Activated CD4-positive, alpha-beta memory T cell treated with anti-CD3 and anti-CD28 coated beads, Interleukin-2, amount 10 ng/mL, durations not matched to agents 7 days and 5 days (primary cell): ENCODE measurements at regions of chr15 and their contacts with region 1.

Region 1: GRCh38 chr15:67091071-67091979 is 25.9 kb downstream of the SMAD3 start:
- DNase-seq: peak; percentile 91
- H3K4me3 Mint-ChIP-seq: peak overlapping the region; percentile 73
- H3K27ac Mint-ChIP-seq: peak overlapping the region; percentile 83
- H3K4me1 Mint-ChIP-seq: peaks cover 100% of the 10 kb centered on the region
- H3K27me3 Mint-ChIP-seq: no peaks in the 10 kb centered on the region

Region 2: GRCh38 chr15:67065444-67066093 is 25.8 kb before region 1 on chr15 and contains the start of gene SMAD3:
- CTCF ChIA-PET with region 1: interaction called, 4 read pairs
- POLR2A ChIA-PET with region 1: interaction called, 489 read pairs
- DNase-seq: peak; percentile 84
- H3K4me3 Mint-ChIP-seq: peak within 1 kb of the TSS; percentile 98
- H3K27ac Mint-ChIP-seq: peak within 1 kb of the TSS; percentile 85
- H3K4me1 Mint-ChIP-seq: peaks cover 42% of the 10 kb centered on the region
- H3K27me3 Mint-ChIP-seq: peaks cover 17% of the 10 kb centered on the region
- total RNA-seq, gene SMAD3: 145 to 148 TPM

Region 3: DNA sequence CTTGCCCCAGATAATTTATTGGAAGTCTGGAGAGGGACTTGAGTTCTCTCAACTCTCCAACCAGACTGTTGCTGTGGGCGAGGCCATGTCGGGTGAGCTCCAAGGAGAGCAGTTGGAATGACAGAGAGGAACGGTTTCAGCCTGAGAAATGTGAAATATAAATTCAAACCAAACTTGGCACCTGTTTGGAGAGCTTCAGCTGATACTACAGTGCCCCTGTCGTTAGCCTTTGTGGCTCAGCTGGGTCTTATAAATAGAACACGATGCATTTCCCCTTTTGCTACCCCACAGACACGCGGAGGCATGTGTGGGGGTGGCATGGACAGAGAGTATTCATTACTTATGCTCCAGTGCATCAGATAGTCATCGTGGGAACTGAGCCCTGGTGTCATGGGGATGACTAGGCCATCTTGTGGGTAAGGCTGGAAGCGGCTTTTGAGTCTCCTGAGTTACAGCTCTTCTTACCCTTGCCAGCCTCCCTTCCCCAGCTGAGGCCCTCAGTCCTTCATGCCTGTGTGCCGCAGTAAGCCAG is 10.4 kb before region 1 on chr15:
- CTCF ChIA-PET with region 1: interaction called, 10 read pairs
- POLR2A ChIA-PET with region 1: interaction called, 489 read pairs
- DNase-seq: peak; percentile 72
- H3K4me3 Mint-ChIP-seq: peak overlapping the region; percentile 41
- H3K27ac Mint-ChIP-seq: peak overlapping the region; percentile 95
- H3K4me1 Mint-ChIP-seq: peaks cover 96% of the 10 kb centered on the region
- H3K27me3 Mint-ChIP-seq: no peaks in the 10 kb centered on the region

Region 4: GRCh38 chr15:67114846-67115600 is 23.7 kb after region 1 on chr15:
- CTCF ChIA-PET with region 1: interaction called, 3 read pairs
- POLR2A ChIA-PET with region 1: interaction called, 54 read pairs
- DNase-seq: peak; percentile 41
- H3K4me3 Mint-ChIP-seq: peak overlapping the region; percentile 3
- H3K27ac Mint-ChIP-seq: peak overlapping the region; percentile 80
- H3K4me1 Mint-ChIP-seq: peaks cover 93% of the 10 kb centered on the region
- H3K27me3 Mint-ChIP-seq: no peaks in the 10 kb centered on the region

Region 5: DNA sequence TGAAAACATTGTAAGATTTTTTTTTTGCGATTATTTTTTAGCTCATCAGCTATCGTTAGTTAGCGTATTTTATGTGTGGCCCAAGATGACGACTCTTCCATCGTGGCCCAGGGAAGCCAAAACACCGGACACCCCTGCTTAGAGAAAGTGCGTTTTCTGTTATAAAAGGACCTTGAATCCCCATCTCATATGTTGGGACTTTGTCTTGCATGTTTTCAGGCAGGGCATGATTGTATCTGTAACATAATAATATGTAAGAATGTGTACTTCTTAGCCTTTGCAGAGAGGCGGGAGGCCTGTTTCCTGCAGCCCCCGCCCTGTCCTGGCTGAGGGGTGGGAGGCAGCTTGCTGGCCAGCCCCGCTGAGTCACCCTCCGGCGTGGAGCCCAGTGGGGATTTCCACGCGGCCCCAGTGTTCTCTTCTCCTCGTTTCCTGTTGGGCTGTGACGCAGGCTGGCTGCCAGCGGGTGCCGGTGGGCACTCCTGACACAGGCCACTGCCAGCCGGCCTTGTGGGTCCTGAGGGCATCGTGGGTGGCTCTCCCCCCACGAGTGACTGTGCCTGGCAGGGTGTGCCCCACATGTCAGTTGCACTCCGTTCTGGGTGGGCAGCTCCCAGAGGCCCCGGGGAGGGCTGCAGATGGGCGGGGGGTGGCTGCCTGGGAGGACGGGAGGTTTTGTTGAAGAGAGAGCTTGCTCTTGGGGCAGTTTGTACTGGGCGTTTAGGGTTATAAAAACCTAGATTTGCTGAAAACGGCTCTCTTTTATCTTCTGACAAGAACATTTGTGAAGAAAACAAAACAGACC is 29.7 kb after region 1 on chr15:
- CTCF ChIA-PET with region 1: interaction called, 4 read pairs
- POLR2A ChIA-PET with region 1: interaction called, 54 read pairs
- DNase-seq: peak; percentile 86
- H3K4me3 Mint-ChIP-seq: peak overlapping the region; percentile 23
- H3K27ac Mint-ChIP-seq: peak overlapping the region; percentile 77
- H3K4me1 Mint-ChIP-seq: peaks cover 95% of the 10 kb centered on the region
- H3K27me3 Mint-ChIP-seq: no peaks in the 10 kb centered on the region